A673 (cell line): ENCODE measurements at regions of chr3 and their contacts with region 1.

Region 1: DNA sequence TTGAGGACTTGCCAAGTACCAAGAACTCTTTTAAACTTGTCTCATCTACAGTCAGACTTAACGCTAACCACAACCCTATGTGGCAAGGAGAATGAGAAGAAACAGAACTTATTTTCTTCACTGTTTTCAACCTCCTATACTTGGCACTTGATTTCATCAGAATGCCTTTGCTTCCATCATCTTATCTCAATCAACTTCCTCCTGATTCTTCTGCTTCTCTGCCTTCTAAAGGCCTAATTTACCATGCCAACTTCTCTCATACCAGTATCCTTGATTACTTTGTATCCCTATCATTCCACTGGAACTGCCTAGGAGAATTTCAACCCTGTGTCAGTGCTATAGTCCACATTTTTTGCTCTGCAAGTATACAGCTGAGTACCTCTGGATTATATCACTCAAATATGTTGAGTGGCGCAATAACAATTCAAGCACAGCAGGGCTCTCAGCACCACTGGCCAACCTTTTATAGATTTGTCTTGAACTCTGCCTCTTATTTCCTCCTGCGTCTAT is 413.6 kb downstream of the ROBO1 start:
- DNase-seq: peak; percentile 5
- H3K4me3 ChIP-seq: no peak overlapping the region
- H3K27ac ChIP-seq: no peak overlapping the region
- H3K4me1 ChIP-seq: no peaks in the 10 kb centered on the region
- H3K27me3 ChIP-seq: no peaks in the 10 kb centered on the region
- CTCF ChIP-seq: no peak

Region 2: GRCh38 chr3:79175870-79176269 is 178.4 kb before region 1 on chr3:
- CTCF ChIA-PET with region 1: no interaction called
- POLR2A ChIA-PET with region 1: no interaction called
- intact Hi-C with region 1: no loop called
- DNase-seq: peak; percentile 8
- H3K4me3 ChIP-seq: no peak overlapping the region
- H3K27ac ChIP-seq: no peak overlapping the region
- H3K4me1 ChIP-seq: peaks cover 4% of the 10 kb centered on the region
- H3K27me3 ChIP-seq: no peaks in the 10 kb centered on the region
- CTCF ChIP-seq: no peak

Region 3: GRCh38 chr3:79383402-79384012 is 29.3 kb after region 1 on chr3:
- CTCF ChIA-PET with region 1: no interaction called
- POLR2A ChIA-PET with region 1: interaction called, 24 read pairs
- intact Hi-C with region 1: no loop called
- DNase-seq: peak; percentile 31
- H3K4me3 ChIP-seq: no peak overlapping the region
- H3K27ac ChIP-seq: no peak overlapping the region
- H3K4me1 ChIP-seq: peaks cover 5% of the 10 kb centered on the region
- H3K27me3 ChIP-seq: no peaks in the 10 kb centered on the region
- CTCF ChIP-seq: no peak

Region 4: GRCh38 chr3:79427081-79427480 is 72.8 kb after region 1 on chr3:
- CTCF ChIA-PET with region 1: no interaction called
- POLR2A ChIA-PET with region 1: no interaction called
- intact Hi-C with region 1: no loop called
- DNase-seq: no peak
- H3K4me3 ChIP-seq: no peak overlapping the region
- H3K27ac ChIP-seq: no peak overlapping the region
- H3K4me1 ChIP-seq: no peaks in the 10 kb centered on the region
- H3K27me3 ChIP-seq: no peaks in the 10 kb centered on the region
- CTCF ChIP-seq: no peak